Cardiac septum (tissue), 1 donor: ENCODE measurements at regions of chr1 and their contacts with region 1.

Region 1: DNA sequence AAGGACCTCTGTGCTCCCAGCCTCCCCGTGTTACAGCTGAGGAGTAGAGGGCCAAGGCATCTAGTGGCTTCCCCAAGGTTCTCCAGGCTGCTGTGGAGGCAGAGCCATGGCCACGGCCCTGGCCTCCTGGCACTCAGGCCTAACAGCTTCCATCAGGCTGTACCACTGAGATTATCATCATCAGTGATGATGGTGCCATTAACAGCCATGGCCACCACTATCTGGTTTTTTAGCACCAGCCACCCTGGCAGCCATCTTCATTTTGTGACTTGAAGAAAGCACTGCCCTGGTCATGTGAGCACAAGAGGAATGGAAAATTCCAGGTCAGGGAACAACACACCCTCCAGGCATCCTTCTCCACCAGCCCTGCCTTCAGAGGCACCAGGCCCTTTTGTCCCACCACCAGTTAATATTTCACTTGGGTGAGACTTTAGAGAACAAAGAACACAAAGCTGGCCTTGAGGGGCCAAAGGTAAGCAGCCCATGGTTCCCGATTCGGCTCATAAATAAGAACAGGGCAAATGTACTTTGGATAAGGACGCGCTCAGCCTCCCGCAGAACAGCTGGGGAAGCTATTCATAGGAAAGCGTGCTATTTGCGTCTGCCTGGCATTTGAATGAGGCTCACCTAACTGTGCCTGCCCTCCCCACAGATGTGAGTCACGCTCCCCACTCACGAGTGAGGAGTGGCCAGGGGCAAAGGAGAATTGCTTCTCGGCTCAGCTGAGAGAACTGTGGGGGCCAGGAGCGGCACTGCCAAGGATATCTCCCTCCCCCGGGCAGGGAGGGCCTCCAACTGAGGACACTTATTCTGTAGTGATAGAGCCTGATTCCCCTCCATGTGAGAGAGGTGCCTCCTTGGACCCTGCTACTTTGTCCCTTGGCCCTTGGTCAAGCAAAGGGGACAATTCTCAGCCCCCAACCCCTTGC is 95.6 kb downstream of the CD58 start:
- DNase-seq: peak; percentile 82

Region 2: GRCh38 chr1:116377541-116378529 is 97.3 kb before region 1 on chr1:
- intact Hi-C with region 1: loop called (anchors 5 kb)
- DNase-seq: no peak

Region 3: DNA sequence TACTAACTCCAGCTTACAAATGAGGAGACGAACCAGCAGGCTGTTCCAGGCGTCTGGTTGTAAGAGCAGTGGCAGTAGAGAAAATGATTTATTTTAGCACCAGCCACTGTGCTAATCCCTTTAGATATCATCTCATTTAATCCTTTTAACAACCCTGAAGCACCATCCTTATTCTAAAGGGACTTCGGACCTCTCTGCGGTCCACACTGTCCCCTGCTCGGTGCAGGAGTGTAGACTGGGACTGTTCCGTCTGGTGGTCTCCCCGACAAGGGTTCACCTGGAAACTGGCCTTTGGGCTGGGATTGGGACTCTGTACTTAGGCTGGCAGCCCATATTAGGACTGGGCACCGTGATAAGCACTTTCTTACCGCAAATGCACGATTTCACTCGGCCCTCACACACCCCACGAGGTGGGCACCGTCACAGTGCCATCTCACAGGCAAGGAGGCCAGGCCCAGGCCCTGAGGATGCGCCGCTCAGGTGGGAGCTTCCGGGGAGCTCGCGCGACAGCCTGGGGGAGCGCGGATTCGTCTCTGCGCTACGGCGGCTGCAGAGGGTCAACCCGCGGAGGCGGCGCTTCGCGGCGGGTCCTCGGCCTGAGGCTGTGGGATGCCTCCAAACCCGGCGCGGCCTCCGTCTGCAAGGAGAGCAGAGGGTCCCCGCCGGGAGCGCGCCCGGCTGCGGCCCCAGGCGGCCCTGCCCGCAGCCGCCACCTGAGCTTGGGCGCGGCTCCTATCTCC is 56.9 kb before region 1 on chr1:
- intact Hi-C with region 1: loop called (anchors 5 kb)
- DNase-seq: peak; percentile 89

Region 4: GRCh38 chr1:116433275-116434257 is 41.6 kb before region 1 on chr1:
- intact Hi-C with region 1: loop called (anchors 2 kb)
- DNase-seq: peak; percentile 80